Motor neuron (in vitro differentiated cells): ENCODE measurements at regions of chr1 and their contacts with region 1.

Region 1: GRCh38 chr1:59971464-59971911 is 44.9 kb upstream of the CYP2J2 start:
- ATAC-seq: peak; percentile 82 to 96 (median 94)
- H3K4me3 ChIP-seq: peak overlapping the region in 1 of 5 donors; percentile 9
- H3K27ac ChIP-seq: no peak overlapping the region
- H3K4me1 ChIP-seq: peaks cover 2 to 18% of the 10 kb centered on the region in 2 donors

Region 2: GRCh38 chr1:60132985-60133675 is 161.6 kb after region 1 on chr1:
- in situ Hi-C with region 1: loop called in 1 of 9 experiments (anchors 25 kb)
- ATAC-seq: peak in 3 of 8 experiments; percentile 46 to 88 (median 84)
- H3K4me3 ChIP-seq: no peak overlapping the region
- H3K27ac ChIP-seq: no peak overlapping the region
- H3K4me1 ChIP-seq: no peaks in the 10 kb centered on the region

Region 3: DNA sequence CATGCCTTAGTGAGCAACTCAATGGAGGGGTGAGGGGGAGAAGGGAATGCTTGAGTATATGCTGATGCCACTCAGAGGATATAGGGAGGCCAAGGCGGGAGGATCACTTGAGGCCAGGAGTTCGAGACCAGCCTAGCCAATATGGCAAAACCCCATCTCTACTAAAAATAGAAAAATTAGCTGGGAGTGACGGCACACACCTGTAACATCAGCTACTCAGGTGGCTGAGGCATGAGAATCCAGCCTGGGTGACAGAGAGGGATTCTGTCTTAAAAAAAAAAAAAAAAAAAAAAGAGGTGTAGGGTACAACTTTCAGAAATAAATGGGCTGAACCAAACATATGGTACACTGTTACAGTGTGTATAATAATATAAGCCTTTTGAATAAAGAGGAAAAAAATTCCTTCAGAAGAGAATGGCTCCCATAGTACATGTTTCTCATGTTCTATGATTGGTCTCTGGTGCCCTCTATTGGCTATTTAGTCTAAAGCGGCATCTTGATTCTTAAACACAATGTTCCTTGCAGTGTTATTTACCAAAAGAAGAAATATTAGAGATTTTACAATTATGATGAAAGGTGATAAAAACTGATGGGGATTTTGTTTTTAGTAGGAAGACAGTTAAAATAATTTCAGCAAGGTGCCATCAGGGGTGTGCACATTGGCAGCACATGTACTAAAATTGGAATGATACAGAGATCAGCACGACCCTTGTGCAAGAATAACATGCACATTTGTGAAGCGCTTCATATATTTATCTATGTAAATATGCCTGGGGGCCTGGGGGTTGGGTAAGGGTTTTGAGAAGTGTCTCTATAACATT is 1880.6 kb after region 1 on chr1:
- in situ Hi-C with region 1: loop called in 2 of 9 experiments (anchors 25 kb)
- ATAC-seq: peak; percentile 49 to 79 (median 75)
- H3K4me3 ChIP-seq: no peak overlapping the region
- H3K27ac ChIP-seq: no peak overlapping the region
- H3K4me1 ChIP-seq: peaks cover 0 to 10% of the 10 kb centered on the region in 2 donors